Dorsolateral prefrontal cortex (tissue), 120 donors: ENCODE measurements at regions of chr5 and their contacts with region 1.

Region 1: DNA sequence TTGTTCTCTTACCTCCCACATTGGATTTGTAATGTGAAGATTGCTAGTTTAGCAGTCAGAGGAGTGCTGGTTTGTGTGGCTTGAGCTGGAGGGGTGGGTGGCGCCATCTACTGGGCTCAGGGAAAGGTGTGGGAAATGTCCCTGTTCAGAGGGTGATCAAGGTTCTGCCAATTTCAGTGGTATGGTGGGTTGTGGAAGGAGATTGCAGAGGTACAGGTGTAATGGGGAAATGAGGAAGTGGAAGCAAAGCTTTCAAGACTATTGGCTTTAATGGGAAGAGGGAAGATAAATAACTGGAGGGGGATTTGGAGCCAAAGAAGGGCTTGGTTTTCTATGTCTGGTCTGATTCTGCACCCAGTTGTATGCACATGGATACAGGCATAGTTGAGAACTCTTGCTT is 76.4 kb downstream of the OSMR start:
- DNase-seq: peak in 9 of 10 donors; percentile 18 to 61 (median 44)
- H3K4me3 ChIP-seq: no peak overlapping the region
- H3K27ac ChIP-seq: no peak overlapping the region
- H3K27me3 ChIP-seq: no peaks in the 10 kb centered on the region
- CTCF ChIP-seq: peak; percentile 35 to 85 (median 69)

Region 2: DNA sequence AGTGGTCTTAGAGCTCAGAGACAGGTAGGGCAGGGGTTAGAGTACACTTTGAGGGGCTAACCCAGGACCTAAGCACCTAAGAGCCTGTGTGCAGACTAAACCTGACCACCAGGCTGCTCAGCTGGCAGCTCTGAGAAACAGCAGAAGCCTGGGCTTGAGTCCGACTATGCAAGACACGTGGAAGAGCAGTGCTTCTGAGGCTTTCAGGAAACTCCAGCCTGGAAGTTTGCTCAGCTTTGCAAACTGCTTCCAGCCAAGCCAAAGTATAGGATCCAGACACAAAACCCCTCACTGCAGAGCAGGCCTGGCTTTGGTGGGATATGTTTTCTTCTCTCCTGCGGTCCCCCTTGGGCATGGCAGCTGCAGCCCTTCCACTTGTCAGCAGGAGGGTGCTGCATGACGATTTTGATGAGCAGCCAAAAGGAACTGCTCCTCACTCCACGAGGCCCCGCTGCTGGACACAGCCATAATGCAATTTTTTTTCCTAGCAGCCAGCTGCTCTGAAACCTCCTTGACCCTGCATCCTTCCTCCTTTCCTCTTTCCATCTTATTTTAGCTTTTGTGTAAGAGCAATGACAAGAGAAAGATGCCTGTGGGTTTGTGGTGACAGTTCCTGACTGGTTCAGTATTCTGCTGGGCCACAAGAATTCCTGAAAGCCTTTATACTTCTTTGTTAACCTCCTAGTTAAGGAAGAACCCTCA is 488.9 kb before region 1 on chr5:
- intact Hi-C with region 1: loop called in 1 of 2 experiments (anchors 10 kb)
- DNase-seq: no peak
- H3K4me3 ChIP-seq: no peak overlapping the region
- H3K27ac ChIP-seq: no peak overlapping the region
- H3K27me3 ChIP-seq: peaks cover 0 to 4% (median 0%) of the 10 kb centered on the region in 45 donors
- CTCF ChIP-seq: no peak